ENCODE measurements at regions of chr3 and their contacts with region 1.

Region 1: DNA sequence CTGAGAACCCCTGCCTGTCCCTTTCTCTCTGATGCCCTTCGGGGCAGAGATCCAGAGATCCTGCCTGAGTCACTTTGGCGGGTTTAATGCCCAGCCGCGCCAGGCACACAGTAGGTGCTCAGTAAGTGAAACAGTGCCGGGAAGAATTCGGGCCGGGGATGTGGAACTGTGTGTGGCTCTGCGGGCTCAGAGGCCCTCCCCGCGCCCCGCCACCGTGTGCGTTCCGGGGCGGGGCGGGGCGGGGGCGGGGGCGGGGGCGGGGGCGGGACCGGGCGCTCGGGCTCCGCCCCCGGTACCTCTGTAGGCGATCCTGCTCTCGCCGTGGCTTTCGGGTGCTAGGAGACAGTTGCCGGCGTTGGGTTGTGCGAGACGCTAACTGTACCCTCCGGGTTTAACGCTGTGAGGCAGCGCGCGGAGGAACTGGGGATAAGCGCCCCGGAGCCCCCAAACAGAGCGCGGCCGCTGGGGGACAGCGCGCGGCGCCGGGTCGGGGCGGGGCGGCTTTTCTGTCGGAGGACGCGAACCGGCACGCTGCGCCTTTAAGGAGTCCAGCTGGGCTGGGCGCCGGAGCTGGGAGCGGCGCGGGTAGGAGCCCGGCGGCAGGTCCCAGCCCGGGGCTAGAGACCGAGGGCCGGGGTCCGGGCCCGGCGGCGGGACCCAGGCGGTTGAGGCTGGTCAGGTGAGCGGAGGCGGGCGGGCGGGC is at the start of gene ABHD6:
- DNase-seq: peak; percentile 76 to 90 (median 83)
- H3K4me3 ChIP-seq: peak within 1 kb of the TSS; percentile 68
- H3K27ac ChIP-seq: peak within 1 kb of the TSS; percentile 67 to 68
- H3K4me1 ChIP-seq: peaks cover 4% of the 10 kb centered on the region
- H3K27me3 ChIP-seq: no peaks in the 10 kb centered on the region
- CTCF ChIP-seq: peak in 1 of 3 donors; percentile 42
- EP300 ChIP-seq: no peak
- POLR2A ChIP-seq: peak; percentile 21
- total RNA-seq, gene ABHD6: 8.2 to 11.3 (median 10.5) TPM

Region 2: GRCh38 chr3:57864853-57865252 is 372.5 kb before region 1 on chr3:
- intact Hi-C with region 1: loop called in 1 of 4 experiments (anchors 5 kb)
- DNase-seq: no peak
- H3K4me3 ChIP-seq: no peak overlapping the region
- H3K27ac ChIP-seq: no peak overlapping the region
- H3K4me1 ChIP-seq: no peaks in the 10 kb centered on the region
- H3K27me3 ChIP-seq: no peaks in the 10 kb centered on the region
- CTCF ChIP-seq: no peak
- EP300 ChIP-seq: no peak
- POLR2A ChIP-seq: no peak

Region 3: DNA sequence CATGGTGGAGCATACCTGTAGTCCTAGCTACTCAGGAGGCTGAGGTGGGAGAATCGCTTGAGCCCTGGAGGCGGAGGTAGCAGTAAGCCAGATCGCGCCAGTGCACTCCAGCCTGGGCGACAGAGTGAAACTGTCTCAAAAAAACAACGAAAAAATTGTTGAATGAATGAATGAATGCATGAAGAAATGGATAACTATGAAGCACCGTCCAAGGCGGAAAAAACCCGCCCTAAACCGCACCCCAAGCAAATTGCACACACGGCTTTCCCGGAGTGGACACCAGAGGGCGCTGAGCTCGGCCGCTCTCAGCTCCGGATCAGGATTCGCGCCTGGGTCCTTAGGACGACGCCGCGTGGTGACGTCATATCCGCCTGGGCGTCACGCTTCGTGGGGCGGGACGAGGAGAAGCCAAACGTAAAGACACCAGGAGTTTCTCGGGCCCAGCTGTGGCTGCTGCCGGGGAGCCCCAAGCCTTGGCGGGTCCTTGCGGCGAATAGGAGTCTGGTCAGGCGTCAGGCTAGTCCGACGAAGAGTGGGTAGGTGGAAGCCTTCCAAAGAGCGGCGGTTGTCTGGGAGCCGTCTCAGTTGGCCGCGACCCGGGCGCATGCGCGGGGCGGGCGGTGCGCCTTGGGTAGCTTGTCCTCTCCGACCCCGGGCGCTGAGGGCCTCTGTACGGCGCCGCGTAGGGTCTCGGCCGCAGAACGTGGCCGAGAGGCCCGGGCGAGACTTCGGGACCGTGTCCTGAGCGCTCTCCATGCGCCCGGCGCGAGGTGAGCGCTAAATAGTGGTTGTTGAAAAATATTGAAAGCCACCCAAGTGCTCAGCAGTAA is 68.7 kb after region 1 on chr3 and contains the starts of genes HTD2 and RPP14:
- intact Hi-C with region 1: loop called in 3 of 4 experiments (anchors 5 to 10 kb)
- DNase-seq: peak; percentile 99
- H3K4me3 ChIP-seq: peak within 1 kb of the TSS; percentile 77
- H3K27ac ChIP-seq: peak within 1 kb of the TSS; percentile 92 to 99
- H3K4me1 ChIP-seq: peaks cover 10% of the 10 kb centered on the region
- H3K27me3 ChIP-seq: no peaks in the 10 kb centered on the region
- CTCF ChIP-seq: peak; percentile 92 to 98 (median 97)
- EP300 ChIP-seq: no peak
- POLR2A ChIP-seq: peak; percentile 71
- total RNA-seq, gene HTD2: 7.3 to 12.0 (median 9.1) TPM
- total RNA-seq, gene RPP14: 7.9 to 16.2 (median 15.0) TPM